Mammary epithelial cell (primary cell): ENCODE measurements at regions of chr2 and their contacts with region 1.

Region 1: DNA sequence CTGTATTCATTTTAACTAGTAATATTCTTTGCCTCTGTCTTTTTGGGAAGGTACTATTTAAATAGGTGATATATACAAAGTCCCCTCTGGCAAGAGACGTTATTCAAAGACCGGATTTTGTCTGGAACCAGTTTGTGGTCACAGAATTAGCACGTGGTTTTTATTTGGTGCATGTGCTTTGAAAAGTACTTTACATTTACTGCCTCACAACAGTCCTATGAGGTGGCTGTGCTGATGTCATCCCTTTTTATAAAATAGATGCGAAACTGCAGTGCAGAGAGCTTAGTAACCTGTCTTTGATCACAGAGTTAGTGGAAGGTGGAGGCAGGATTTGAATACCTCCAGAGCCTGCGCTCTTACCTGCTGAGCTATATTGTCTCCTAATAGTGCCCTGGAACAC is 4.0 kb downstream of the LPIN1 start:
- DNase-seq: peak; percentile 62
- H3K4me3 ChIP-seq: no peak overlapping the region
- H3K27ac ChIP-seq: peak overlapping the region; percentile 64
- H3K4me1 ChIP-seq: peaks cover 68% of the 10 kb centered on the region
- H3K27me3 ChIP-seq: no peaks in the 10 kb centered on the region
- CTCF ChIP-seq: no peak

Region 2: GRCh38 chr2:11688222-11689069 is 62.0 kb before region 1 on chr2:
- CTCF ChIA-PET with region 1: interaction called, 9 read pairs
- dilution Hi-C with region 1: no loop called
- in situ Hi-C with region 1: no loop called
- intact Hi-C with region 1: loop called (anchors 2 kb)
- DNase-seq: peak; percentile 65
- H3K4me3 ChIP-seq: peak overlapping the region; percentile 13 to 27 (median 23)
- H3K27ac ChIP-seq: no peak overlapping the region
- H3K4me1 ChIP-seq: peaks cover 14% of the 10 kb centered on the region
- H3K27me3 ChIP-seq: peaks cover 3% of the 10 kb centered on the region
- CTCF ChIP-seq: peak; percentile 82 to 90

Region 3: DNA sequence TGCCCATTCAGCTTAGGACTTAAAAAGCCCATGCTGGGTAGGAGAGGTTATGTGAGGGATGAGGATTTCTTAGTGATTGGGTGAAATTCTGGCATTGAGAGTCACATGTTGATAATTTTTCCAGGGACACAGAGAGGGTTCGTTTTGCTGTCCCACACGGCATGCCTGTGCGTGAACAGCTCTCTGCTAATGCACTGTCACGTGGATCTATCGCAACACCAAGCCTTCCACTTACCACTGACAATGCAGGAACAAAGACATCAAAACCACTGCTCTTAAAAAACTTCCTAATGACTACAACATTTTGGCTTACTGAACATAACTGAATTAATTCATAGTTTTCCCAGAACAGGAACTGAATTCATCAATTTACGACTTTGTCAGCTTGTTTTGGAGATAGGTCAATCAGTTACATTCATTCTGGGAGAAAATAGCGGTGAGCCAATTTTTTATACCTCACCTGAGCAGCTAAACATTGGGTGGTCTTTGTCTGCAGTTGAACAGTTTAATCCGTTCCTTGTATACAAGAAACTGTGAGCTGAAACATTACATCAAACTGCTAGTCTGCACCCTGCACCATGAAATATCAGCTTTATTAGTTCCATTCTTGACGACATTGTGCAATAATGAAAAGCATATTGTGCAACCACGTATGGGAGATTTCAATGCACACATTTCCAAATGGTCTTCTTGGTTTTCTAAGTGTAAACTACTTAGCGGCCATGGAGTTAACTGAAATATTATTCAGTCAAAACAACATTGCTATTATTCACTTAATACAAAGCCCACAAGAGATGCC is 123.1 kb after region 1 on chr2:
- CTCF ChIA-PET with region 1: no interaction called
- dilution Hi-C with region 1: no loop called
- in situ Hi-C with region 1: no loop called
- intact Hi-C with region 1: no loop called
- DNase-seq: no peak
- H3K4me3 ChIP-seq: no peak overlapping the region
- H3K27ac ChIP-seq: no peak overlapping the region
- H3K4me1 ChIP-seq: no peaks in the 10 kb centered on the region
- H3K27me3 ChIP-seq: no peaks in the 10 kb centered on the region
- CTCF ChIP-seq: no peak